GM12878 (cell line): ENCODE measurements at regions of chr20 and their contacts with region 1.

Region 1: GRCh38 chr20:40980106-40980827 is 48.4 kb upstream of the TOP1 start:
- DNase-seq: peak; percentile 83
- ATAC-seq: peak; percentile 86
- H3K4me3 ChIP-seq: peak overlapping the region; percentile 20; the same call in 1 of the 2 replicates
- H3K27ac ChIP-seq: peak overlapping the region; percentile 75
- H3K4me1 ChIP-seq: peaks cover 32% of the 10 kb centered on the region
- H3K27me3 ChIP-seq: no peaks in the 10 kb centered on the region
- CTCF ChIP-seq: no peak
- EP300 ChIP-seq: peak; percentile 6 to 48; a peak in 2 of 4 replicates
- POLR2A ChIP-seq: 0 out of 2 replicates have a peak, but pooled peaks have one; percentile 39
- RAD21 ChIP-seq: 0 out of 2 replicates have a peak, but pooled peaks have one; percentile 23

Region 2: DNA sequence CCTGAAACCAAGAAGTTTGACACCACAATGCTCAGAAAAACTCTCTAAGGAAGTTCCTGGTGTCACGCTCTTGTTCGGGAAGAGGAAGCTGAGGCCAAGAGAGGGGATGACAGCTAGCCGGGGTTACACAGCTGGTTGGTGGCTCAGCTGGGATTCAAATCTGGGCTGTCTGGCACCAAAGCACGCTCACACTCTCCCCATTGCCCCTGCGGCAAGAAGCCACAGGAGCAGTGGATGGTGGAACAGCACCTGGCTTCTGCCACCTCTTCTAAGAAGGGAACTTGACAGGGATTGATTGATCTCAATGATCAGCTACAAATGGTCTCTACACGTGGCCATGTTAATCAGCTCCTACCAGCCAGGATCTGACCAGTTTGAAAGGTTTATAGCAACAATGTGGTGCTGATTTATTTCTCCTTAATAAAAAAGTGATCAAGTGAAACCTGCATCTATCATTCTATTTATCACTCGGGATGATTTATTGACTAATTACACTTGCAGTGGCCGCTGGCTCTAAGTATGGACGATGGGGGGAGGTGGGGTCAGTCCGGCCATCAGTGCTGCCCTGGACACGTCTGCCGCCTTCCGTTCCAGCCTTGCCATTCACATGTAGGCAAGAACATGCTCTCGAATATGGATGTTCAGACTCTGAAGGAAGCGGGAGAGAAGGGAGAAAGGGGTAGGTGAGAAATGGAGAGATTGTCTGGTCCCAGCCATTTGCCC is 23.6 kb before region 1 on chr20:
- CTCF ChIA-PET with region 1: no interaction called
- POLR2A ChIA-PET with region 1: no interaction called
- RAD21 ChIA-PET with region 1: no interaction called
- SMC1A ChIA-PET with region 1: no interaction called
- in situ Hi-C with region 1: no loop called
- intact Hi-C with region 1: no loop called
- DNase-seq: no peak
- ATAC-seq: no peak
- H3K4me3 ChIP-seq: no peak overlapping the region
- H3K27ac ChIP-seq: no peak overlapping the region
- H3K4me1 ChIP-seq: peaks cover 3% of the 10 kb centered on the region; the same call in 1 of the 2 replicates
- H3K27me3 ChIP-seq: no peaks in the 10 kb centered on the region; a peak in 1 of 4 replicates
- CTCF ChIP-seq: no peak
- EP300 ChIP-seq: no peak
- POLR2A ChIP-seq: no peak
- RAD21 ChIP-seq: no peak

Region 3: GRCh38 chr20:41011551-41012067 is 31.3 kb after region 1 on chr20:
- CTCF ChIA-PET with region 1: interaction called, 256 read pairs
- POLR2A ChIA-PET with region 1: interaction called, 15 read pairs
- RAD21 ChIA-PET with region 1: interaction called, 40 read pairs
- SMC1A ChIA-PET with region 1: interaction called, 333 read pairs
- in situ Hi-C with region 1: no loop called
- intact Hi-C with region 1: no loop called
- DNase-seq: peak; percentile 95
- ATAC-seq: peak; percentile 95
- H3K4me3 ChIP-seq: peak overlapping the region; percentile 38
- H3K27ac ChIP-seq: peak overlapping the region; percentile 91
- H3K4me1 ChIP-seq: peaks cover 44% of the 10 kb centered on the region
- H3K27me3 ChIP-seq: no peaks in the 10 kb centered on the region
- CTCF ChIP-seq: no peak
- EP300 ChIP-seq: peak; percentile 83 to 88
- POLR2A ChIP-seq: no peak
- RAD21 ChIP-seq: peak; percentile 30; the same call in 1 of the 2 replicates

Region 4: DNA sequence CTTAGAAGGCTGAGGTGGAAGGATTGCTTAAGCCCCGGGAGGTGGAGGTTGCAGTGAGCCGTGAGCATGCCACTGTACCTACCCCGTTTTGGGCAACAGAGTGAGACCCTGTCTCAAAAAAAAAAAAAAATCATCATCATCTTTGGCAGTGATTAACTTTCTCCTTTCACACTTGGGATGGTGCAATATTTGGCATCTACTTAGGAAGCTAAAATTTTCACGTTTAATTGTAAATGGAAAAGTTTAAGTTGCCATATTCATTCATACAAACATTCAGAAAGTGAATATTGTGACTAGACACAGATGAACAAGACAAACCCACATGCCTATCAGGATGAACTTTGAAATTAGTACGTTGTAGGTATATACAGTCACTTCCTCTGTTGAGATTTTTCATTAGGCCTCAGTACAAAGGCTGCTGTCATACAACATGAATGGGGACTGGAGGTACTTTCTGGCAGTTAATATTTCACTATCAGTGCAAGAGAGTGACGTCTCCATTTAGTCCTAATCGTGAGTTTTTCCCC is 58.7 kb after region 1 on chr20:
- CTCF ChIA-PET with region 1: interaction called, 510 read pairs
- POLR2A ChIA-PET with region 1: interaction called, 13 read pairs
- RAD21 ChIA-PET with region 1: interaction called, 696 read pairs
- SMC1A ChIA-PET with region 1: interaction called, 456 read pairs
- in situ Hi-C with region 1: no loop called
- intact Hi-C with region 1: no loop called
- DNase-seq: no peak
- ATAC-seq: peak; percentile 90
- H3K4me3 ChIP-seq: no peak overlapping the region
- H3K27ac ChIP-seq: 0 out of 2 replicates have a peak overlapping the region, but pooled peaks have one; percentile 23
- H3K4me1 ChIP-seq: no peaks in the 10 kb centered on the region
- H3K27me3 ChIP-seq: no peaks in the 10 kb centered on the region
- CTCF ChIP-seq: no peak
- EP300 ChIP-seq: peak; percentile 31 to 77; a peak in 3 of 4 replicates
- POLR2A ChIP-seq: no peak
- RAD21 ChIP-seq: no peak

Region 5: DNA sequence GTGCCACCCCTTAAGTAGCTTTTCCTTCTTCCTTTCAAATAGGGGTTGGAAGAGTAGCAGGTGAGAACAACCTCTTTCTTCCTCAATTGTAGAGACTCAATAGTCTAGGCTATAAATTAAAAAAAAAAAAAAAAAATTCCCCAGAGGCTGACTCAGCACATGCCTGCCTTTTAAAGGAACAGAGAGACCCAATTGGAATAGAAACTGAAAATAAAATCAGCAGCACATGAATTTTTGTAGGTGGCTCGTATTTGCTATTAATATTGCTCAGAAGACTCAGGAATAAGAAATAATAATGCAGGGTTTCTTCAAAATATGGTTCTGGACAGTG is 67.7 kb after region 1 on chr20:
- CTCF ChIA-PET with region 1: interaction called, 510 read pairs
- POLR2A ChIA-PET with region 1: interaction called, 16 read pairs
- RAD21 ChIA-PET with region 1: interaction called, 696 read pairs
- SMC1A ChIA-PET with region 1: interaction called, 456 read pairs
- in situ Hi-C with region 1: no loop called
- intact Hi-C with region 1: no loop called
- DNase-seq: no peak
- ATAC-seq: peak; percentile 69
- H3K4me3 ChIP-seq: peak overlapping the region; percentile 64
- H3K27ac ChIP-seq: peak overlapping the region; percentile 76
- H3K4me1 ChIP-seq: peaks cover 44% of the 10 kb centered on the region
- H3K27me3 ChIP-seq: no peaks in the 10 kb centered on the region
- CTCF ChIP-seq: no peak
- EP300 ChIP-seq: no peak
- POLR2A ChIP-seq: no peak
- RAD21 ChIP-seq: no peak

Region 6: DNA sequence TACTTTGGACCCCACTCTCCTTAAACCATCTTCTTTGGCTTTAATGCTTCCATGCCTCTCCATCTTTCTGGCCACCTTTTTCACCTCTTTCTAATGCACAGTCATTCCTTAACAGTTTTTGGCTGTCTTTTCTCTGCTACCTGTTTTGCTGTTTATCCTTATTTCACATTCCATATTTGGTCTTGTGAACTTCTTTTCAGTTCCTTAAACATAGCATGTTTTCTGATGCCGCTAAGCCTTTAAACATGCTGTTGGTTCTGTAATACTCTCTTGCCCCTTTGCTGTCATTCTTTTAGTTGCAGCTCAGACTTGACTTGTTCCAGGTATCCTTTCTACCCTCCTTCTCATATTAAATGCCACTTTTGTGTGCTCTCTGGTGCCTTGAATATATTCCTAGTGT is 84.1 kb after region 1 on chr20:
- CTCF ChIA-PET with region 1: interaction called, 281 read pairs
- POLR2A ChIA-PET with region 1: interaction called, 4 read pairs
- RAD21 ChIA-PET with region 1: interaction called, 180 read pairs
- SMC1A ChIA-PET with region 1: interaction called, 52 read pairs
- in situ Hi-C with region 1: no loop called
- intact Hi-C with region 1: no loop called
- DNase-seq: peak; percentile 68
- ATAC-seq: peak; percentile 93
- H3K4me3 ChIP-seq: no peak overlapping the region
- H3K27ac ChIP-seq: peak overlapping the region; percentile 62
- H3K4me1 ChIP-seq: peaks cover 20% of the 10 kb centered on the region
- H3K27me3 ChIP-seq: no peaks in the 10 kb centered on the region
- CTCF ChIP-seq: peak; percentile 8 to 59 (median 36); a peak in 3 of 6 replicates
- EP300 ChIP-seq: no peak; a peak in 1 of 4 replicates
- POLR2A ChIP-seq: no peak
- RAD21 ChIP-seq: peak; percentile 77

Region 7: DNA sequence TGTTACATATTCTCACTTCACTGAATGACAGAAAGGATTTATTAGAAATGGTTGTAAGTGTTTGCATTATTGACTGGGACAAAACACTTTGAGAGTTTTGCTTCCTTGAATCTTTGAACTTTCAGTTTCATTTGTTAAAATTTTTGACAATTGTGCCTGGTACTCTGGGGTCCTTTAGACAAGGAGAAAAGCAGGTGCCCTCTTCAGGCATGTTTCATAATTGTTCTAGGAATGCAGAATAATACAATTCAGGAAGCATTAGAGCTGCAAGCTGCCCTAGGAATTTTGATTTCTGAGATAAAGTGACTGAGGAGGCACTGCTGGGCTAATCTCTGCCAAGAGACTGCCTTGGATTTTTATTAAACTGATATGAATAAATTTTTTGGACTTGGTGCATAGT is 98.1 kb after region 1 on chr20:
- CTCF ChIA-PET with region 1: interaction called, 20 read pairs
- POLR2A ChIA-PET with region 1: no interaction called
- RAD21 ChIA-PET with region 1: interaction called, 3 read pairs
- SMC1A ChIA-PET with region 1: interaction called, 16 read pairs
- in situ Hi-C with region 1: no loop called
- intact Hi-C with region 1: no loop called
- DNase-seq: peak; percentile 21
- ATAC-seq: peak; percentile 71
- H3K4me3 ChIP-seq: no peak overlapping the region
- H3K27ac ChIP-seq: no peak overlapping the region
- H3K4me1 ChIP-seq: peaks cover 12% of the 10 kb centered on the region
- H3K27me3 ChIP-seq: no peaks in the 10 kb centered on the region
- CTCF ChIP-seq: peak in 2 of 3 experiments; percentile 20 to 21; a peak in 1 of 6 replicates
- EP300 ChIP-seq: no peak
- POLR2A ChIP-seq: no peak
- RAD21 ChIP-seq: peak; percentile 50

Region 8: DNA sequence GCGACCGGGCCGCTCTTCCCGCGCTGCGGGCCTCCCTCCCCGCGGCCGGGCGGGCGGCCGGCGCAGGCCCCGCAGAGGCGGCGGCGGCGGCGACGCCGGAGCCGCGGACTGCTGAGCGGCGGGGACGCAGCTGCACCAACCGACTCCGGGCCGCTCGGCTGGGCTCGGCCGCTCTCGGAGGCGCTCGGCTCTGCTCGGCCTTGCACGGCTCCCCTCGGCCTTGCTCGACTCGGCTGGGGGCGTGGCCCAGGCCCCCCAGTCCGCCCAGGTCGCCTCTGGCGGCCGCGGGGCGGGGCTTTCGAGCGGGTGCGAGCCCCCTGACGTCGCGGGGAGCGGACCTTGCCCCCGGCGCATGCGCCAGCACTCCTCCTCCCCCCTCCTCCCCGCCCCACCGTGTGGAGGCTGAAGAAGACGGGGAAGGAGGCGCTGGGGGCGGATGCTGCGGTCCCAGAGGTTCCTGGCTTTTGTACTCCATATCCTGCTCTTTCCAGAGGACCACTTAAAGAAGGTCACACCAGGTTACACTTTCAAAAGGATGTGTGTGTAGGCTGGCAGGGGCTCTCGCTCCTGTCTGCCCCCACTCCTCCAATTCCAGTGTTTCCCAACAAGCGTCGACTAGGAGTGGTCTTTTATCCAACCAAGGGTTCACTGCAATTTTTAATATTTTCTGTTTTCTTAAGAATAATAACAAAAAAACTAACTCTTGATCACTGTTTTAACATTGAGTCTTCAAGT is 337.4 kb after region 1 on chr20 and contains the start of gene ZHX3:
- CTCF ChIA-PET with region 1: no interaction called
- POLR2A ChIA-PET with region 1: no interaction called
- RAD21 ChIA-PET with region 1: no interaction called
- SMC1A ChIA-PET with region 1: no interaction called
- in situ Hi-C with region 1: no loop called
- intact Hi-C with region 1: loop called (anchors 10 kb)
- DNase-seq: peak; percentile 78
- ATAC-seq: peak; percentile 99
- H3K4me3 ChIP-seq: peak within 1 kb of the TSS; percentile 96
- H3K27ac ChIP-seq: peak within 1 kb of the TSS; percentile 61
- H3K4me1 ChIP-seq: peaks cover 3% of the 10 kb centered on the region; the same call in 1 of the 2 replicates
- H3K27me3 ChIP-seq: no peaks in the 10 kb centered on the region
- CTCF ChIP-seq: no peak
- EP300 ChIP-seq: no peak
- POLR2A ChIP-seq: peak; percentile 60; the same call in 1 of the 2 replicates
- RAD21 ChIP-seq: no peak
- polyA plus RNA-seq, gene ZHX3: 1.3 to 1.4 TPM